CD8-positive, alpha-beta memory T cell (primary cell): ENCODE measurements at regions of chr20 and their contacts with region 1.

Region 1: DNA sequence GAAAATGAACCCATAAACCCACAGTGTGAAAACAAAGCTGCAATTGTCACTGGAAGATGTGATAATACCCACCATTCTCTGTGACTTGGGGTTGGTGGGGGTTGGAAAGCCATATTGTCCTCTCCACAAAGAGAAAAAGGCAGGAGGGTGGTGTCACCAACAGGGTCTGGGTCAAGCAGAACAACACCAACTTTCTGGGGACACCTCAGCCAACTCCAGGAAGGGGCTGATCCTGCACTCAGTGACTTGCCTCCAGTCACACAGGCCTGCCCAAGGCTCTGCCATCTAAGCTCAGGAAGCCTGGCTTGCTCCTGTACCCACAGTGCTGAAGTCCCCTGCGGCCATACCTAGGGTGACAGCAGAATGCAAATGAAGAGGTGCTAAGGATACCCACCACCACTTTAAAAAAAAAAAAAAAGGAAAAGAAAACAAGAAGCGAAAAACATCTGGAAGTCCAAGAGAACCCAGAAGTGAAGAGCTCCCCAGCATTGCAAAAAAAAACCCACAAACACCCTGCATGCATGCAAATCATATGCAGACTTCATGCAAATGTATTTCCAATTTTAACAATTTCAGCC is 110.6 kb downstream of the PREX1 start:
- DNase-seq: no peak
- H3K4me3 ChIP-seq: no peak overlapping the region
- H3K4me3 Mint-ChIP-seq: peak overlapping the region; percentile 35 to 88 (median 79)
- H3K27ac ChIP-seq: no peak overlapping the region
- H3K27ac Mint-ChIP-seq: peak overlapping the region; percentile 83 to 100 (median 95)
- H3K4me1 ChIP-seq: peaks cover 77% of the 10 kb centered on the region
- H3K4me1 Mint-ChIP-seq: peaks cover 93 to 94% (median 94%) of the 10 kb centered on the region in 3 donors
- H3K27me3 ChIP-seq: no peaks in the 10 kb centered on the region
- H3K27me3 Mint-ChIP-seq: peaks cover 0 to 5% of the 10 kb centered on the region in 2 donors

Region 2: DNA sequence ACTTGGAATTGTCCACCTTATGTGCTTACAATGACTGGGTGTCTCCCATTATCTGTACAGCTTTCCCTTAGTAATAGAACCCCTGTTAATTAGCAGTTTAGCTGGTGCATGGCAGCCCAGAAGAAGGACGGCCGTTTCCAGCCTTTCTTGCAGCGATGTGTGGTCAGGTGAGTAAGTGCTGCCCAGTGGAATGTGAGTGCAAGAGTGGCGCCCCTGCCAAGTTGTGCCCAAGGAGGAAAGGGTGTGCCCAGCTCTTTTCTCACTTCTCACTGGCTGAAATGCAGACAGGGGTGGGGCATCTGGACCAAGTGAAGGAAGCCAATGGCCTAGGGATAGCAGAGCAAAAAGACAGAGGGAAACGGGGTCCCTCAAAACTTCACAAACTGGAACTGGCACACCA is 186.2 kb before region 1 on chr20:
- CTCF ChIA-PET with region 1: no interaction called
- POLR2A ChIA-PET with region 1: no interaction called
- DNase-seq: no peak
- H3K4me3 ChIP-seq: no peak overlapping the region
- H3K4me3 Mint-ChIP-seq: no peak overlapping the region
- H3K27ac ChIP-seq: no peak overlapping the region
- H3K27ac Mint-ChIP-seq: no peak overlapping the region
- H3K4me1 ChIP-seq: no peaks in the 10 kb centered on the region
- H3K4me1 Mint-ChIP-seq: no peaks in the 10 kb centered on the region
- H3K27me3 ChIP-seq: no peaks in the 10 kb centered on the region
- H3K27me3 Mint-ChIP-seq: peaks cover 8 to 30% of the 10 kb centered on the region in 2 donors

Region 3: DNA sequence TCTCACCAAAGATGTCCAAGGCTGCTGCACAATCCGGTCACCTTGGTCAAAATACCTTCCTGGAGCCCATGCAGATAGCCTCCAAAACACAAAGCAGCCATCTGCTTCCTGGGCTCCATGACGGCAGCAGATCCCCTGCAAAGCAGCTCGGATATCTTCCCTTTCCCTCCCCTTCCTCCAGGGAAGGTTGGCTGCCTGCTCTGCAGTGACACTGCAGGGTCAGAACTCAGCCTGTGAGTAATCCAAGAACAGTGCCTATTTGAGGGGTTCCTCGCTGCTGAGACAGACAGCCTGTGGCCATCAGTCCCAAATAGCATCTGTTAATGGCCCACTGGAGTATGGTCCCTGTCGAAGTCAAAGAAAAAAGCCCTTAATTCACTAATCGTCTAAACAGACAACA is 160.2 kb before region 1 on chr20:
- CTCF ChIA-PET with region 1: no interaction called
- POLR2A ChIA-PET with region 1: no interaction called
- DNase-seq: no peak
- H3K4me3 ChIP-seq: no peak overlapping the region
- H3K4me3 Mint-ChIP-seq: no peak overlapping the region
- H3K27ac ChIP-seq: no peak overlapping the region
- H3K27ac Mint-ChIP-seq: no peak overlapping the region
- H3K4me1 ChIP-seq: no peaks in the 10 kb centered on the region
- H3K4me1 Mint-ChIP-seq: no peaks in the 10 kb centered on the region
- H3K27me3 ChIP-seq: peaks cover 3% of the 10 kb centered on the region
- H3K27me3 Mint-ChIP-seq: peaks cover 0 to 11% of the 10 kb centered on the region in 2 donors

Region 4: DNA sequence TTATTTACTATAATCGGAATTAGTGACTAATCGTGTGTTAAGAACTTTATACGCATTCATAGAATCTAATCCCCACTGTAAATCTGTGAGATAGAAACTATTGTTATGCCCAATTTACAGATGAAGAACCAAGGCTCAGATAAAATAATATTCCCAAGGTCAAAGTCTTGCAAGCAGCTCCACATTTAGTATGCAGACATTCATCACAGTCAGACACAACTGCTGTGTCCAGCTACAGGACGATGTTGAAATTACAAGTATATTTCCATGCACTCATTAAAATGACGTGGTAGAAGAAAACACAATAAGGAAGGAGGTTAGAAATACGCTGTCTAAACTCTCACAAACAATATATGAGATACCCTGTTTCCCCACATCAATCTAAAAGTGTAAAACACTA is 28.1 kb after region 1 on chr20:
- CTCF ChIA-PET with region 1: no interaction called
- POLR2A ChIA-PET with region 1: no interaction called
- DNase-seq: no peak
- H3K4me3 ChIP-seq: no peak overlapping the region
- H3K4me3 Mint-ChIP-seq: no peak overlapping the region
- H3K27ac ChIP-seq: no peak overlapping the region
- H3K27ac Mint-ChIP-seq: peak overlapping the region in 5 of 8 donors; percentile 4 to 73 (median 58)
- H3K4me1 ChIP-seq: peaks cover 24% of the 10 kb centered on the region
- H3K4me1 Mint-ChIP-seq: peaks cover 45 to 76% (median 54%) of the 10 kb centered on the region in 3 donors
- H3K27me3 ChIP-seq: no peaks in the 10 kb centered on the region
- H3K27me3 Mint-ChIP-seq: peaks cover 0 to 4% of the 10 kb centered on the region in 2 donors

Region 5: GRCh38 chr20:48760403-48760983 is 43.3 kb after region 1 on chr20:
- CTCF ChIA-PET with region 1: interaction called, 11 read pairs
- POLR2A ChIA-PET with region 1: interaction called, 9 read pairs
- DNase-seq: peak; percentile 65 to 91 (median 86)
- H3K4me3 ChIP-seq: peak overlapping the region; percentile 3
- H3K4me3 Mint-ChIP-seq: peak overlapping the region; percentile 73 to 92 (median 82)
- H3K27ac ChIP-seq: peak overlapping the region; percentile 64
- H3K27ac Mint-ChIP-seq: peak overlapping the region; percentile 96 to 98 (median 96)
- H3K4me1 ChIP-seq: peaks cover 82% of the 10 kb centered on the region
- H3K4me1 Mint-ChIP-seq: peaks cover 92 to 97% (median 97%) of the 10 kb centered on the region in 3 donors
- H3K27me3 ChIP-seq: no peaks in the 10 kb centered on the region
- H3K27me3 Mint-ChIP-seq: peaks cover 0 to 2% of the 10 kb centered on the region in 2 donors

Region 6: DNA sequence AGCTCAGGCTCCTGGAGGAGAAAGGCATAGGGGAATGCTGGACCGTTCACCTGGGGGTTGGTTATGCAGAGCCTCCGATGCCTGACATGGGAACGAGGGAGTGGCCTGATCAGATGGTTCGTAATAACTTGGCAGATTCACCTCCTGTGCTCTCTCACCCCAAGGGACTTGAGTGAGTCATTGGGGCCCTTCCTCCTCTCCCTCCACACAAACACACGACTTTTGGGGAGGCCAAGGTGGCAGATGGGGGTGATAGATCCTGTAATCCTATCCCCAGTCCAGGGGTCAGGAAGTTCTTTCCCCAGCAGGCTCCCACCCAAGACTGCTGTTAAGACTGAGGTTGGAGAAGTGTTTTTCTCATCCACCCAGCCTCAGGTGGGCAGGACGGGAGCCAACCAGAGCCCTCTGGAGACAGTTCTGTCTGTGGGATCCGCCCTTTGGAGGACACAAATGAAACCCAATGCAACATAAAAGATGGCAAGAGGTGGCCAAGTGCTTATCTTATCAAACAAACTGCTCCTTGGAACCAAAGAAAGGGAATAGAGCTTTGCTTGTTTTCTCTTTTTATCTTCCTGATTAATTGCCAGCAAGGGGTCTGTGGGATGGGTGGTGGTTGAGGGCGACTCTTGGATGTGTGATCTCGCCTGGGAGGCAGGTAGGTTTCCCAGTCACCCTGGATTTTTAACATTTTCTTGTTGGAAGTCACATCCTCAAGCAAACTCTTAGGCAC is 158.9 kb after region 1 on chr20:
- CTCF ChIA-PET with region 1: no interaction called
- POLR2A ChIA-PET with region 1: no interaction called
- DNase-seq: no peak
- H3K4me3 ChIP-seq: no peak overlapping the region
- H3K4me3 Mint-ChIP-seq: no peak overlapping the region
- H3K27ac ChIP-seq: no peak overlapping the region
- H3K27ac Mint-ChIP-seq: no peak overlapping the region
- H3K4me1 ChIP-seq: peaks cover 5% of the 10 kb centered on the region
- H3K4me1 Mint-ChIP-seq: peaks cover 9 to 19% (median 16%) of the 10 kb centered on the region in 3 donors
- H3K27me3 ChIP-seq: no peaks in the 10 kb centered on the region
- H3K27me3 Mint-ChIP-seq: no peaks in the 10 kb centered on the region

Region 7: DNA sequence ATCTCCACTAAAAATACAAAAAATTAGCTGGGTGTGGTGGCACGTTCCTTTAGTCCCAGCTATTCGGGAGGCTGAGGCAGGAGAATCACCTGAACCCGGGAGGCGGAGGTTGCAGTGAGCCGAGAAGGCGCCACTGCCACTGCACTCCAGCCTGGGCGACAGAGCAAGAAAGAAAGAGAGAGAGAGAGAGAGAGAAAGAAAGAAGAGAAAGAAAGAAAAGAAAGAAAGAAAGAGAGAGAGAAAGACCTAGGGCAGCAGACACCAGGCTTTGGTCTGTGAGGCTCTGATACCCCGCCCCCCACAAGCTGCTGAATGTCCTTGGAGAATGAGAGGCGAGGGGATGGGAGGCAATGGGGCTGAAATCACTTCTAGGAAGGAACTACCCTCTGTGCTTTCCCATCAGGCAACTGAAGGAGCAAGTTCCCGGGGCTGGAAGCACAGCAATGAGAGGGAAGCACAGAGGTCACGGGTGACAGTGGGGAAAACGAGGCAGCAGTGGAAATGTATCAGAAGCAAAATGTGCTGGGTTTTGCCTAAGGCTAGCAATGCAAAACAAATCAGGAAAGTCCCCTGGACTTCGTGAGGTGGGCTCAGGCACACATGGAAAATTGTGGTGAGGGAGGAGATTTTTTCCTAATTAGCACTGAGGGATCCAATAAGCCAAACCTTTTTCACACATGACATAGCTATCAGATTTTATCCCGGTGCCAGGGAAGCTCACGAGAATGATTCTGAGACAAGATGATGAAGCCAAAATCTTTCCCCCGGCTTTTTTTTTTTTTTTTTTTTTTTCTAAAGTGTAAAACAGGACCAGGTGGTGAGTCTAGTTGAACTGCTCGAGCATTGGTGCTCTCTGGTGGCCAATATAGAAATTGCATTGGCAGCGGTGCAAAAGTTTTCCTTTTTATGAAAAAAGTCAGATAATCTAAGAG is 187.4 kb after region 1 on chr20:
- CTCF ChIA-PET with region 1: interaction called, 11 read pairs
- POLR2A ChIA-PET with region 1: no interaction called
- DNase-seq: peak; percentile 42 to 76 (median 55)
- H3K4me3 ChIP-seq: no peak overlapping the region
- H3K4me3 Mint-ChIP-seq: peak overlapping the region in 1 of 7 donors; percentile 81
- H3K27ac ChIP-seq: no peak overlapping the region
- H3K27ac Mint-ChIP-seq: peak overlapping the region in 1 of 8 donors; percentile 14
- H3K4me1 ChIP-seq: no peaks in the 10 kb centered on the region
- H3K4me1 Mint-ChIP-seq: peaks cover 7 to 12% (median 10%) of the 10 kb centered on the region in 3 donors
- H3K27me3 ChIP-seq: no peaks in the 10 kb centered on the region
- H3K27me3 Mint-ChIP-seq: peaks cover 0 to 1% of the 10 kb centered on the region in 2 donors